ENCODE measurements at regions of chr5 and their contacts with region 1.

Region 1: DNA sequence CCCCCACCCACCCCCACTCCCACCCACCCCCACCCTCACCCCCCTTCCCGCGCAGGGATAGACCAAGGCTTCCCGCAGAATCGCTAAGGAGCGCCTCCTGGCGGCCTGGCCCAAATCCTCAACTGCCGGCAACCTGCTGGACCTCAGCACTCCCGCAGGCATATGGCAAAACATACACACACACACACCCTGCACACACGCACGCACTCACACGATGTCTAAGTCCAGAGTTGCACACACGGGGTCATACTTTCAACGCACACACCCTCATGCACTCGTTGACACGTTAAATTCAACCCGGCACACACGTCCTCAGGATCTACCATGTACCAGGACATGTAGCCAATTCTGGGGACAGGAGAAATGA is 1.7 kb downstream of the CPLX2 start:
- DNase-seq: no peak

Region 2: DNA sequence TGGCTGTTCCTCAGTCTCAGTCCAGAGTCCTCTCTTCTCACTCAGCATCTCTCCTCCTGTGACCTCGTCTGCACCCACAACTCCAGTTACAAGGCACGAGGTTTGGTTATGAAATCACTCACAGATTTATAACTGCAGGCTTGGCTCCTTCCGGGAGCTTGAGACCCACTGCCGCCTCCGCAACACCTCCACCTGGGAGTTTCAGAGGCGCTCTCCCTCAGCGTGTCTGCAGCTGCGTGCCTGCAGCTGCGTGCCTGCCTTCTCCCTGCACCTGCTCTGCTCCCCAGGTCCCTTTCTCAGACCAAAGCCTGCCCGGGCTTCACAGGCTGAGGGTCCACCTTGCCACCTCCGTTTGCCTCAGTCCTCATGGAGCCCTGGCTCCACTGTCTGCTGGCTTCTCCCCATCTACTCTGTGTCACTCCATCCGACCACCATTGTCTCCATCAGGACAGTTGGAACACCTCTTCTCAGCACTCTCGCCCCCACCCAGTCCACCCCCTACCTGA is 163.7 kb before region 1 on chr5:
- intact Hi-C with region 1: no loop called
- DNase-seq: peak; percentile 65

Region 3: DNA sequence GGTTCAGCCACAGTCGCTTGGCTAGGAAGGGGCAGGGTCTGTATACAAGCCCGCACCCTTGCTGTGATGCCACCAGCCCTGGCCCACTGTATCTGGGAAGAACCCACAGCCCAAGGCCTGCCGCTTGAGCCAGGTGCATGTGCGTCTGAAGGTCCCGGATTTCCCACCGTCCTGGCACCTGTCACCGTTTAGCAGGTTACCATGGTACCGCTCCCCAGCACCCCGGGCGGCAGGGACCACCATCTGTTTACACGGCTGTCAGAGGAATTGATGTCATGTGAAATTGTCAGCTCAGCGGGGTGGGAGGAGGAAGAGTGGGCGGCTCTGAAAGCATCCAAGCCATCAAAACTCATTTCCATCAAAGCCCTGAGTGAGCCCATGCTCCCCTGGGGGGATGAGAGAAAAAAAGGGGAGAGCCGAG is 122.5 kb before region 1 on chr5:
- intact Hi-C with region 1: no loop called
- DNase-seq: no peak

Region 4: GRCh38 chr5:175772747-175773533 is 100.1 kb before region 1 on chr5:
- intact Hi-C with region 1: no loop called
- DNase-seq: no peak

Region 5: GRCh38 chr5:175796536-175797499 is 76.3 kb before region 1 on chr5:
- intact Hi-C with region 1: loop called (anchors 10 kb)
- DNase-seq: peak; percentile 83